ENCODE measurements at regions of chr17 and their contacts with region 1.

Region 1: DNA sequence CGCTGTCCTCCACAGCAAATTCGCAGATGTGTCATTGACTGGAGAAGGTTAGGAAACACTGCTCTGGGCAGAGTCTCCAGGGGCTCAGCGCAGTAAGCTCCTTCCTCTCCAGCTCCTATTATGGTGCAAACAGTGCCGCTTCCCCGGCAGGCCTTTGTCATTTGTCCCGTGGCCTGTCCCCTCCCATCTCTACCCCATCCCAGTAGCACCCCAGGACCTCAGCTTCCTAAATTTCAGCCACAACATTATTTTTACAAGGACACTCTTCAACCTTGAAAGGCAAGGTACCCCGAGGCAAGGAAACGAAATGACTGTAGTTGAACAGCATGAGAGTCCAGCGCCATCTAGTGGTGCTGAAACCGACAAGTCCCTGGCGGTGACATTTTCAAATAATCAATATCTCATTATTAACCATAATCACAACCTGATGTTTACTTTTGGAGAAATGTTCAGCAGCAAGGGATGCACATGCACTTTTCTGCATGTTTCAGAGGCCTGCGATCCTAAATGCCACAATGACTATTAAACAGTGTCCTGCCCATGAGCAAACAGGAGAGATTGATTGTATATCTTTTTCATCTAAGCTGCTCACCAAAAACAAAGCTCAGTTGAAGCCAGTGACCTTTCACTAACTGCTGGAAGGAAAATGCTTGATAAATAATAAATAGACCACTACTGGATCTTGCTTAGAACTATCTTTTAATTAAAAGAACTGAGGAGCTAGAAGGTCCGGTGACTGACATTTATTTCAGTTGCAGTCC is 16.5 kb downstream of the MRPS23 start:
- DNase-seq: peak; percentile 58 to 65 (median 61)
- H3K4me3 ChIP-seq: no peak overlapping the region
- H3K4me3 Mint-ChIP-seq: no peak overlapping the region
- H3K27ac ChIP-seq: no peak overlapping the region
- H3K27ac Mint-ChIP-seq: no peak overlapping the region
- H3K4me1 ChIP-seq: peaks cover 10% of the 10 kb centered on the region
- H3K4me1 Mint-ChIP-seq: peaks cover 0 to 5% (median 0%) of the 10 kb centered on the region in 4 donors
- H3K27me3 ChIP-seq: no peaks in the 10 kb centered on the region
- H3K27me3 Mint-ChIP-seq: no peaks in the 10 kb centered on the region

Region 2: GRCh38 chr17:57819285-57819684 is 14.1 kb before region 1 on chr17:
- CTCF ChIA-PET with region 1: interaction called, 12 read pairs
- POLR2A ChIA-PET with region 1: no interaction called
- intact Hi-C with region 1: no loop called
- DNase-seq: no peak
- H3K4me3 ChIP-seq: no peak overlapping the region
- H3K4me3 Mint-ChIP-seq: no peak overlapping the region
- H3K27ac ChIP-seq: no peak overlapping the region
- H3K27ac Mint-ChIP-seq: no peak overlapping the region
- H3K4me1 ChIP-seq: no peaks in the 10 kb centered on the region
- H3K4me1 Mint-ChIP-seq: no peaks in the 10 kb centered on the region
- H3K27me3 ChIP-seq: no peaks in the 10 kb centered on the region
- H3K27me3 Mint-ChIP-seq: peaks cover 13 to 19% of the 10 kb centered on the region in 2 donors

Region 3: GRCh38 chr17:57861000-57861789 is 27.8 kb after region 1 on chr17:
- CTCF ChIA-PET with region 1: interaction called, 12 read pairs
- POLR2A ChIA-PET with region 1: no interaction called
- intact Hi-C with region 1: no loop called
- DNase-seq: peak; percentile 25 to 61 (median 32)
- H3K4me3 ChIP-seq: peak overlapping the region; percentile 52 to 66
- H3K4me3 Mint-ChIP-seq: peak overlapping the region; percentile 82 to 96 (median 86)
- H3K27ac ChIP-seq: no peak overlapping the region
- H3K27ac Mint-ChIP-seq: peak overlapping the region; percentile 13 to 75 (median 71)
- H3K4me1 ChIP-seq: peaks cover 13% of the 10 kb centered on the region
- H3K4me1 Mint-ChIP-seq: peaks cover 9 to 20% (median 14%) of the 10 kb centered on the region in 4 donors
- H3K27me3 ChIP-seq: no peaks in the 10 kb centered on the region
- H3K27me3 Mint-ChIP-seq: peaks cover 4 to 8% of the 10 kb centered on the region in 2 donors

Measured in CD4-positive, alpha-beta memory T cell (primary cell).